Endothelial cell of umbilical vein (primary cell): ENCODE measurements at regions of chr2 and their contacts with region 1.

Region 1: DNA sequence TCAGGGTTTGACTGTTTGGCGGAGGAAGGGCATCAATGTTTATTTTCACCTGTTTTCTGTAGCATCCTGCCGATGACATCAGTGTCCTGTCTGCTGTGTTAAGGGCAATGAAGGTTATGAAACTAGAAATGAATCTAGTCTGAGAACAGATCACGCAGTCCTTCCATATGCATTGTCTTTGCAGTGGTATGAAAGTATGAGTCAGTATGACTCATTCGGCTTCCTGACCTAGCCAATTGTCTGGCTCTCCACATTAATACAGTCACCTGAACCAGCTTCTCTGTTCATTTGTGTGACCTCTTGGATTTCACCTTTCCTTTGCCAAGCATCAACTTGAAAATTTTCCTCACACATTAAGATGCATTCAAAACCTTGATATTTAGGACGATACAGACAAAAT is 353.8 kb downstream of the RND3 start:
- DNase-seq: peak; percentile 97
- H3K4me3 ChIP-seq: no peak overlapping the region
- H3K27ac ChIP-seq: peak overlapping the region; percentile 90
- H3K4me1 ChIP-seq: peaks cover 17% of the 10 kb centered on the region
- H3K27me3 ChIP-seq: no peaks in the 10 kb centered on the region
- CTCF ChIP-seq: no peak
- POLR2A ChIP-seq: peak; percentile 38

Region 2: GRCh38 chr2:149994057-149994753 is 139.4 kb before region 1 on chr2:
- CTCF ChIA-PET with region 1: no interaction called
- POLR2A ChIA-PET with region 1: no interaction called
- dilution Hi-C with region 1: no loop called
- intact Hi-C with region 1: loop called (anchors 2 kb)
- DNase-seq: no peak
- H3K4me3 ChIP-seq: no peak overlapping the region
- H3K27ac ChIP-seq: no peak overlapping the region
- H3K4me1 ChIP-seq: peaks cover 14% of the 10 kb centered on the region
- H3K27me3 ChIP-seq: no peaks in the 10 kb centered on the region
- CTCF ChIP-seq: no peak
- POLR2A ChIP-seq: no peak

Region 3: DNA sequence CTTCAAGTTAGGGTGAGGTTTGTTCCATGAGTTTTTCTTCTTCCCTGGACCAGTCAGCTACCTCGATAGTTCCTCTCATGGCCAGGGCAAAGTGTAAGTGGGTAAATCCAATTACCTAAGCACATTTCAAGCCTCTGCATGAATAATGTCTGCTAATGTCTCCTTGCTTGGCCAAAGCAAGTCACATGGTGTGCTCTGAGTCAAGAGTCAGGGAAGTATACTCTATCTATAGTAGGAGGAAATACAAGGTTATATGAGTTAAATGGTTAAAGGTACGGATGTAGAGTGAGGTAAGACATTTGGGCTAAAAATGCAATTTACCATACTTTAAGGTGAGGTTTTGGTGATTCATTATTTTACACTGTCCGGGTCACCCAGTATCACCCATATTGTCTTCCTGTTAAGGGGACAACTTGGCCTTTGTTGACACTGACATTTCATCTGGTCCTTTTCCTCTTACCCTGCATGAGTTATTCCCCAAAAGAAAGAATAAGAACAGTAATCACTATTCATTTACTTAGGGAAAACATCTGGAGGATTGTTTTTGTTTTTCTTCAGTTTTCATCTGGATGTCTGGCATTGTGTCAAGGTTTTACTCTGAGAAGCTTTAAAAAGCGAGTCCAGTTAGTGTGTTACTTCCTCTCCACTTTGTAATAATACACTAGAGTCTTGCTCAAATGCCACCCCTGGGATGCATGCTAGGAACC is 51.7 kb before region 1 on chr2:
- CTCF ChIA-PET with region 1: no interaction called
- POLR2A ChIA-PET with region 1: no interaction called
- dilution Hi-C with region 1: no loop called
- intact Hi-C with region 1: loop called (anchors 1 kb)
- DNase-seq: peak; percentile 61
- H3K4me3 ChIP-seq: no peak overlapping the region
- H3K27ac ChIP-seq: peak overlapping the region; percentile 55
- H3K4me1 ChIP-seq: peaks cover 27% of the 10 kb centered on the region
- H3K27me3 ChIP-seq: no peaks in the 10 kb centered on the region
- CTCF ChIP-seq: no peak
- POLR2A ChIP-seq: no peak

Region 4: DNA sequence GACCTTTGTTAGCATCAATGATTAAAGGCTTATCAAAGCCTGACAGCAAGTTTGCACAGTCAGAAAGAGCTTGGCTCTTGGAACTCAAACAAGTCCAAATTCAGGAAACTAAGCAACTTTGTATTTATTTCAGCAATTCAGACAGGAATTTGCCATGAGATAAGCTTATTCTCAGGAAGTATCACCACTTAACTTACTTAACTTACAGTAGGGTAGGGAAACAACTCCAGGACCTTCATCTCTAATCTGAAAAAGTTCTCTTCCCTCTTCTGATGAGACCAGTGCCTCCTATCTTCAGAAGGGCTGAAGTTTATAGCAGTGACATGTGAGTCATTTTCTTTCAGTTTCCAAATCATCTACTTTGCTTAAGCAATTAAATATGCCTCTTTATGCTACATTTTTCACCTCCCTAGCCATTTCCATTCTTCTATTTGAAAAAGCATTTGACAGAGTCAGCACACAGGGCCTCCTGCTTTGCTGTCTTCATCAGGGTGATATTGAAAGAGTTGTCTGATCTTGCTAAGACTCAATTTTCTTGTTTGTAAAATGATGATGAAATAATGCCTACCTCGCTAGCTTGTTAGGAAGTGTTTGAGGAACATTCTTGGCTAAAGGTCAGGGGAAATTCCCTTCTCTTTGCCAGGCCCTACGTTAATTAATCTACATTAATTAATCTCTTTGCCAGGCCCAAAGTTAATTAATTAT is 35.6 kb before region 1 on chr2:
- CTCF ChIA-PET with region 1: no interaction called
- POLR2A ChIA-PET with region 1: no interaction called
- dilution Hi-C with region 1: no loop called
- intact Hi-C with region 1: loop called (anchors 2 kb)
- DNase-seq: peak; percentile 91
- H3K4me3 ChIP-seq: peak overlapping the region in 1 of 3 experiments; percentile 31
- H3K27ac ChIP-seq: peak overlapping the region; percentile 58
- H3K4me1 ChIP-seq: peaks cover 19% of the 10 kb centered on the region
- H3K27me3 ChIP-seq: no peaks in the 10 kb centered on the region
- CTCF ChIP-seq: peak; percentile 15 to 19
- POLR2A ChIP-seq: peak; percentile 45

Region 5: DNA sequence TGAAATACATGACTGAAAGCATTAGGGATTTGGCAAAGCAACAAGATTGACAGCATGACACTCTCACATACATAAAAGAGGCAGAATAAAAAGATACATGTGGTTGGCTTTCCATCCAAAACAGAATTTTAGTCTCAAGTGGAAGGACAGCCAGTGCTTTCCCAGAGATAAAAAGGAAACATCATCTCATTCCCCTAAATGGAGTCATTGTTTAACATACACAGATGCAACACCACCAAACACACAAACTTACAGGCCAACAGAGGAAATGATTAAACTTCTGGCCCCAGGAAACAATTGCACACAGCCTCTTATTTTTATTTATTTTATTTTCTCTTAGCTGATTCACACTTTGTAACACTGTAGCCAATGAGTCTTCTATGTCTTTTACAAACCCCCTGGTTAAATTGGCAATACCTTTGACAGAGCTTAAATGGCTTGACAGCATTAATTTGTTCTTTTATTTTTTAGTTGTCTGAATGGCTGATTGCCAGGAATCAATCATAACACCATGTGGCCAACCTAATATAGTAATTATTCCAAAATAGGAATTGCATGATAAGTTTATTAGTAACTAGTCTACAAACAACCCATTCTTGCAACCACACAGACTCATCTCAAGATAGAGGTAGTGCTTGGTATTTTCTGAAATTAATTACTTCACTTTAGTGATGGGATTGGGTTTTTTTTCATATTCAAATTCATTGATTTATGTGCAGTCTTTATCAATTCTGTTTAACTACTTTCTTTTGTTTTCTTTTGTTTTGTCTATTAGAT is 163.3 kb after region 1 on chr2:
- CTCF ChIA-PET with region 1: no interaction called
- POLR2A ChIA-PET with region 1: no interaction called
- dilution Hi-C with region 1: no loop called
- intact Hi-C with region 1: loop called (anchors 2 kb)
- DNase-seq: peak; percentile 92
- H3K4me3 ChIP-seq: no peak overlapping the region
- H3K27ac ChIP-seq: peak overlapping the region; percentile 81
- H3K4me1 ChIP-seq: peaks cover 17% of the 10 kb centered on the region
- H3K27me3 ChIP-seq: no peaks in the 10 kb centered on the region
- CTCF ChIP-seq: no peak
- POLR2A ChIP-seq: no peak

Region 6: DNA sequence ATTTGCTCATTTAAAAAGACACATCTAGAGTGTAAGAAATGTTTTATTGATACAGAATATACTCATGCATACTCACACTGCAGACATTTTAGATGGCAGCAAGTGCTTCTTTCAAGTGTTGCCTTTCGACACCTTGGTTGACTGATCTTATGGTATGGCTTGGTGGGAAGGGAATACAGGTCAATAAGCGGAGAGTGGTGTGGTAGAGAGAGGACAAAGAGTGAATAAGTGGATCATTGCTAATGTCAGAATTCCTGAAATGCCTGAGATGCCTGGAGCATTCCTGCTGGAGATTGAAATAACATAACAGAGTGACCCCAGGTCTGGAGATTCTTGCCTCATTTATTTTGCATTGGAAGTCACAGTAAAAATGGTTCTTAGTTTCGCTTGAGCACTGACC is 277.2 kb after region 1 on chr2:
- CTCF ChIA-PET with region 1: no interaction called
- POLR2A ChIA-PET with region 1: no interaction called
- dilution Hi-C with region 1: no loop called
- intact Hi-C with region 1: loop called (anchors 2 kb)
- DNase-seq: peak; percentile 85
- H3K4me3 ChIP-seq: no peak overlapping the region
- H3K27ac ChIP-seq: peak overlapping the region; percentile 95
- H3K4me1 ChIP-seq: peaks cover 40% of the 10 kb centered on the region
- H3K27me3 ChIP-seq: no peaks in the 10 kb centered on the region
- CTCF ChIP-seq: no peak
- POLR2A ChIP-seq: peak; percentile 39